Caco-2 (cell line): ENCODE measurements at regions of chr17 and their contacts with region 1.

Region 1: GRCh38 chr17:43125133-43125966 is at the start of gene BRCA1:
- DNase-seq: peak; percentile 98 to 99
- H3K4me3 ChIP-seq: peak within 1 kb of the TSS; percentile 90
- H3K4me3 Mint-ChIP-seq: peak within 1 kb of the TSS; percentile 98
- H3K27ac Mint-ChIP-seq: peak within 1 kb of the TSS; percentile 99
- H3K4me1 ChIP-seq: peaks cover 18% of the 10 kb centered on the region
- H3K4me1 Mint-ChIP-seq: no peaks in the 10 kb centered on the region
- H3K27me3 ChIP-seq: no peaks in the 10 kb centered on the region
- H3K27me3 Mint-ChIP-seq: no peaks in the 10 kb centered on the region
- CTCF ChIP-seq: no peak
- total RNA-seq, gene BRCA1: 50.8 and 51.1 TPM in 2 replicates

Region 2: DNA sequence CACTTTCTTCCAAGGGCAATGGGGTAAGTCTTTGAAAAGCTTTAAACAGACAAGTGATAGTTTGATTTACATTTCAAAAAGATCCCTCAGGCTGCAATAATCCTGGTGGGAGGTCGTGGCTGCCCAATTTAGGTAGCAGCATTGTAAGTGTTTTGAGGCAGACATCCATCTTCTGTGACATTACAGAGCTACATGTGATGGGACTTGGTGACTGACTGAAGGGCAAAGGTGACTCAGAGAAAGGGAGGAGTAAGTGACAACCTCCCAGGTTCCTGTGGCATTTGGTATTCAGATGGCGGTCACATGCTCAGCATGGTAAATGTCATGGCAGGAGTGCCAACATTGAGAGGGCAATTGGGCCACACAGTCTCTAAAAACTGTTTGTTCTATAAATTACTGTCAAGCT is 763.6 kb before region 1 on chr17:
- CTCF ChIA-PET with region 1: no interaction called
- POLR2A ChIA-PET with region 1: interaction called, 11 read pairs
- intact Hi-C with region 1: no loop called
- DNase-seq: no peak
- H3K4me3 ChIP-seq: no peak overlapping the region
- H3K4me3 Mint-ChIP-seq: no peak overlapping the region
- H3K27ac Mint-ChIP-seq: no peak overlapping the region
- H3K4me1 ChIP-seq: peaks cover 9% of the 10 kb centered on the region; the same call in 1 of the 2 replicates
- H3K4me1 Mint-ChIP-seq: peaks cover 12% of the 10 kb centered on the region
- H3K27me3 ChIP-seq: no peaks in the 10 kb centered on the region
- H3K27me3 Mint-ChIP-seq: no peaks in the 10 kb centered on the region
- CTCF ChIP-seq: no peak